ENCODE measurements at regions of chr9 and their contacts with region 1.

Region 1: GRCh38 chr9:21709464-21710058 is 92.9 kb upstream of the MTAP start:
- H3K4me3 ChIP-seq: no peak overlapping the region
- H3K27ac ChIP-seq: no peak overlapping the region
- H3K4me1 ChIP-seq: no peaks in the 10 kb centered on the region
- CTCF ChIP-seq: 0 out of 2 replicates have a peak, but pooled peaks have one; percentile 14

Region 2: GRCh38 chr9:21465859-21466518 is 243.6 kb before region 1 on chr9:
- CTCF ChIA-PET with region 1: interaction called, 11 read pairs
- POLR2A ChIA-PET with region 1: no interaction called
- H3K4me3 ChIP-seq: no peak overlapping the region
- H3K27ac ChIP-seq: no peak overlapping the region
- H3K4me1 ChIP-seq: no peaks in the 10 kb centered on the region
- CTCF ChIP-seq: no peak

Region 3: GRCh38 chr9:21688108-21689102 is 21.2 kb before region 1 on chr9:
- CTCF ChIA-PET with region 1: interaction called, 13 read pairs
- POLR2A ChIA-PET with region 1: no interaction called
- H3K4me3 ChIP-seq: no peak overlapping the region
- H3K27ac ChIP-seq: no peak overlapping the region
- H3K4me1 ChIP-seq: no peaks in the 10 kb centered on the region; the same call in 1 of the 2 replicates
- CTCF ChIP-seq: no peak

Region 4: GRCh38 chr9:21696411-21696873 is 13.1 kb before region 1 on chr9:
- CTCF ChIA-PET with region 1: interaction called, 12 read pairs
- POLR2A ChIA-PET with region 1: no interaction called
- H3K4me3 ChIP-seq: no peak overlapping the region
- H3K27ac ChIP-seq: no peak overlapping the region
- H3K4me1 ChIP-seq: no peaks in the 10 kb centered on the region
- CTCF ChIP-seq: no peak

Region 5: GRCh38 chr9:21720758-21721157 is 11.2 kb after region 1 on chr9:
- CTCF ChIA-PET with region 1: interaction called, 21 read pairs
- POLR2A ChIA-PET with region 1: no interaction called
- H3K4me3 ChIP-seq: no peak overlapping the region
- H3K27ac ChIP-seq: no peak overlapping the region
- H3K4me1 ChIP-seq: no peaks in the 10 kb centered on the region
- CTCF ChIP-seq: no peak

Region 6: GRCh38 chr9:21750021-21750735 is 40.6 kb after region 1 on chr9:
- CTCF ChIA-PET with region 1: interaction called, 10 read pairs
- POLR2A ChIA-PET with region 1: no interaction called
- H3K4me3 ChIP-seq: no peak overlapping the region
- H3K27ac ChIP-seq: no peak overlapping the region
- H3K4me1 ChIP-seq: no peaks in the 10 kb centered on the region
- CTCF ChIP-seq: no peak

Region 7: DNA sequence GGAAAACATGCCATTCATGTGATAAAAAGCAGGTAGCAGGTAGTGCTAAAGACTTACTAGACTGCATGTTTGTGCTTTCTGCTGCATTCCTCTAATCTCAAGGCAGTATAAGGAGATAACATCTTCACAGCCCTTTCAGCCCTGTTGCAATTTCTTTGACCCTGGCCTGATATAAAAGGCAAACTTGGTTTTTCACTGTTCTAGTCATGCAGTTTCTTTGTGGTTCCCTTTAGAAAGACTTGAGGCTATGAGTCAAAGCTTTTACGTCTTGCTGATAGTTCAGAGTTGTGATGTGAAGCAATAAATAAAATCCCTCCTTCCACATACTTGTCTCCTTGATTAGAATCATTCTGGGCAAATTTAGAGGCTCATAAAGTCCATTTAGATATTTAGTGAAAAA is 388.1 kb after region 1 on chr9:
- CTCF ChIA-PET with region 1: no interaction called
- POLR2A ChIA-PET with region 1: no interaction called
- H3K4me3 ChIP-seq: no peak overlapping the region
- H3K27ac ChIP-seq: no peak overlapping the region
- H3K4me1 ChIP-seq: peaks cover 4% of the 10 kb centered on the region
- CTCF ChIP-seq: no peak

Region 8: DNA sequence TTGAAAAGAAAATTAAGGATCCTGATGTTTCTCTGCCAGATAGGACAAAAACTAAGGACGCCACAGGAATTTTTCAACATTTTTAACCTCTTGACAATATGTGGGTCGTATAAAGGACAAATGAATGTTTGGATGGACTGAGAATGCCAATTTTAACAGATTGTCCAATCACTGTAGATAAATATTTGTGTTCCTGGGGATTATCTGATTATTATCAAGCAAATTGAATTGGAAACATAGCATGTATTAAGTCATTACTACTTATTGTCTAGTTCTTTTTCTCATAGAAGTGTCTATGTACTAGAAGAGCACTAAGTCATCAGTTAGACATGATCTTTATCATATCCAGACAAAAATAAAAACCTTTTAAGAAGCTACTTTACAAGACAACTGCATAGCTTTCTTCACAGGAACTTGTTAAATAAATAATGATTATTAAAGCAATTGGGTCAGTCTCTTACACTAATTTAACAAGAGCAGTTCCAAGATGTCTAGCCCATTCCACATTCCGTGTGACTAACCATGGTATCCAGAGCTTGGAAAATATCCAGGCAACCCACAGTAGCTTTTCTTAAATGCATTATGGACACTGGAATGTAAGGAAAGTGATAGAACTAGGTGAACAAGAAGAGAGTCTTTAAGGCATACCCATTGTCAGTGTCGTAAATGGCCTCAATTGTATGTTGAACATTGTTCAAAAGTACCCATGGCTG is 427.0 kb after region 1 on chr9:
- CTCF ChIA-PET with region 1: no interaction called
- POLR2A ChIA-PET with region 1: no interaction called
- H3K4me3 ChIP-seq: no peak overlapping the region
- H3K27ac ChIP-seq: no peak overlapping the region
- H3K4me1 ChIP-seq: peaks cover 2% of the 10 kb centered on the region; the same call in 1 of the 2 replicates
- CTCF ChIP-seq: no peak